Endothelial cell of umbilical vein (primary cell): ENCODE measurements at regions of chr1 and their contacts with region 1.

Region 1: GRCh38 chr1:28437934-28438699 is 67.7 kb upstream of the RCC1 start:
- DNase-seq: peak; percentile 95
- H3K4me3 ChIP-seq: peak overlapping the region; percentile 31 to 72 (median 33)
- H3K27ac ChIP-seq: peak overlapping the region; percentile 49
- H3K4me1 ChIP-seq: peaks cover 27% of the 10 kb centered on the region
- H3K27me3 ChIP-seq: no peaks in the 10 kb centered on the region
- CTCF ChIP-seq: no peak
- POLR2A ChIP-seq: peak; percentile 99

Region 2: DNA sequence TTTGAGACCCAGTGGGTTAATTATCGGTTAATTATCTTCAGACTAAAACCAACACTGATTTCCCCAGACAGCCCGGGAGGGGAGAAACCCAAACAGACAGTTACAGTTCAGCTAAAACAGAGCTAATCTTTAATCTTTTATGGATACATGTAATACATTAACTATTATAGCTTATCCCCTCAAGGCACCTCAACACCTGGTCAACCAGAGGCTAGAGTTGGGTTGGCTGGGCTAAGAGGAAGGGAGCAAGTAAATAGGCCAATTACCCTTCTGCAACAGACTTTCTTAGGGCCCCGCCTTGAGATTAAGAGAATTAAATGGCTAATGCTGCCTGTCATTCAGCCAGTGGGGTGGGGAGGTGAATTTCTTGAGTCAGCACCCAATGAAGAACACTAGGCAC is 115.9 kb before region 1 on chr1:
- CTCF ChIA-PET with region 1: no interaction called
- POLR2A ChIA-PET with region 1: no interaction called
- dilution Hi-C with region 1: no loop called
- intact Hi-C with region 1: no loop called
- DNase-seq: no peak
- H3K4me3 ChIP-seq: no peak overlapping the region
- H3K27ac ChIP-seq: no peak overlapping the region
- H3K4me1 ChIP-seq: no peaks in the 10 kb centered on the region
- H3K27me3 ChIP-seq: no peaks in the 10 kb centered on the region
- CTCF ChIP-seq: no peak
- POLR2A ChIP-seq: no peak

Region 3: GRCh38 chr1:28412731-28413130 is 25.4 kb before region 1 on chr1:
- CTCF ChIA-PET with region 1: interaction called, 10 read pairs
- POLR2A ChIA-PET with region 1: no interaction called
- dilution Hi-C with region 1: no loop called
- intact Hi-C with region 1: no loop called
- DNase-seq: no peak
- H3K4me3 ChIP-seq: no peak overlapping the region
- H3K27ac ChIP-seq: no peak overlapping the region
- H3K4me1 ChIP-seq: peaks cover 18% of the 10 kb centered on the region
- H3K27me3 ChIP-seq: no peaks in the 10 kb centered on the region
- CTCF ChIP-seq: no peak
- POLR2A ChIP-seq: no peak

Region 4: GRCh38 chr1:28421744-28422143 is 16.4 kb before region 1 on chr1:
- CTCF ChIA-PET with region 1: interaction called, 20 read pairs
- POLR2A ChIA-PET with region 1: interaction called, 14 read pairs
- dilution Hi-C with region 1: no loop called
- intact Hi-C with region 1: loop called (anchors 2 kb)
- DNase-seq: peak; percentile 76
- H3K4me3 ChIP-seq: no peak overlapping the region
- H3K27ac ChIP-seq: peak overlapping the region; percentile 31
- H3K4me1 ChIP-seq: peaks cover 32% of the 10 kb centered on the region
- H3K27me3 ChIP-seq: no peaks in the 10 kb centered on the region
- CTCF ChIP-seq: no peak
- POLR2A ChIP-seq: no peak

Region 5: GRCh38 chr1:28428012-28428411 is 10.1 kb before region 1 on chr1:
- CTCF ChIA-PET with region 1: interaction called, 5 read pairs
- POLR2A ChIA-PET with region 1: interaction called, 10 read pairs
- dilution Hi-C with region 1: no loop called
- intact Hi-C with region 1: loop called (anchors 2 kb)
- DNase-seq: no peak
- H3K4me3 ChIP-seq: no peak overlapping the region
- H3K27ac ChIP-seq: no peak overlapping the region
- H3K4me1 ChIP-seq: peaks cover 1% of the 10 kb centered on the region
- H3K27me3 ChIP-seq: no peaks in the 10 kb centered on the region
- CTCF ChIP-seq: no peak
- POLR2A ChIP-seq: no peak

Region 6: GRCh38 chr1:28449904-28450303 is 11.8 kb after region 1 on chr1:
- CTCF ChIA-PET with region 1: interaction called, 4 read pairs
- POLR2A ChIA-PET with region 1: interaction called, 5 read pairs
- dilution Hi-C with region 1: no loop called
- intact Hi-C with region 1: loop called (anchors 1 kb)
- DNase-seq: peak; percentile 92
- H3K4me3 ChIP-seq: no peak overlapping the region
- H3K27ac ChIP-seq: peak overlapping the region; percentile 19
- H3K4me1 ChIP-seq: peaks cover 26% of the 10 kb centered on the region
- H3K27me3 ChIP-seq: no peaks in the 10 kb centered on the region
- CTCF ChIP-seq: no peak
- POLR2A ChIP-seq: no peak

Region 7: DNA sequence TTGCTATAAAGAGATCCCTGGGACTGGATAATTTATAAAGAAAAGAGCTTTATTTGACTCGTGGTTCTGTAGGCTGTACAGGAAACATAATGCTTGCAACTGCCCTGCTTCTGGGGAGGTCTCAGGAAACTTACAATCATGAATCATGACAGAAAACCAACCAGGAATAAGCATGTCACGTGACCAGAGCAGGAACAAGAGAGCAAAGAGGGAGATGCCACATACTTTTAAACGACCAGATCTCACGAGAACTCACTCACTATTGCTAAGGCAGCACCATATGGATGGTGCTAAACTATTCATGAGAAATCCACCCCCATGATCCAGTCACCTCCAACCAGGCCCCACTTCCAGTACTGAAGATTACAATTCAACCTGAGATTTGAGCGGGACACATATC is 18.0 kb after region 1 on chr1:
- CTCF ChIA-PET with region 1: no interaction called
- POLR2A ChIA-PET with region 1: interaction called, 5 read pairs
- dilution Hi-C with region 1: no loop called
- intact Hi-C with region 1: loop called (anchors 1 kb)
- DNase-seq: peak; percentile 92
- H3K4me3 ChIP-seq: no peak overlapping the region
- H3K27ac ChIP-seq: peak overlapping the region; percentile 83
- H3K4me1 ChIP-seq: peaks cover 56% of the 10 kb centered on the region
- H3K27me3 ChIP-seq: no peaks in the 10 kb centered on the region
- CTCF ChIP-seq: no peak
- POLR2A ChIP-seq: peak; percentile 80